ENCODE measurements at regions of chr3 and their contacts with region 1.

Region 1: DNA sequence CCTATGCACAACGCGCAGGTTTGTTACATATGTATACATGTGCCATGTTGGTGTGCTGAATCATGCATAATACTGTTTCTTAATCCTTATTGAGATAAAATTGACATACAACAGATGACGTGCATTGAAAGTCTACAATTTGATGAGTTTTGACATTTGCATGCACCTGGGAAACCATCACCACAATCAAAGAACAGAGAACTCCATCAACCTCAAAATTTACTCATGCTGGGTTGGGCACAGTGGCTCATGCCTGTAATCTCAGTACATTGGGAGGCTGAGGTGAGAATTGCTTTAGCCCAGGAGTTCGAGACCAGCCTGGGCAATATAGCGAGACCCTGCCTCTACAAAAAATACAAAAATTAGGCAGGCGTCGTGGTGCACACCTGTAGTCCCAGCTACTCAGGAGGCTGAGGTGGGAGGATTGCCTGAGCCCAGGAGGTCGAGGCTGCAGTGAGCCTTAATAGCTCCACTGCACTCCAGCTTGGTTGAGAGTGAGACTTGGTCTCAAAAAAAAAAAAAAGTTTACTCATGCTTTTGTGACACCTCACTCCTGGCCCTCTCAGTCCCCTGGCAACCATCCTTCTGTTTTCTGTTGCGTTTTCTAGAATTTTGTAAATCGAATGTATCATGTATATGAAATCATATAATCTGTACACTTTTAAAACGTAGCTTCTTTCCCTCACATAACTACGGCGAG is 56.6 kb downstream of the BHLHE40 start:
- DNase-seq: no peak
- H3K4me3 Mint-ChIP-seq: no peak overlapping the region
- H3K27ac Mint-ChIP-seq: peak overlapping the region; percentile 55
- H3K4me1 Mint-ChIP-seq: peaks cover 55% of the 10 kb centered on the region
- H3K27me3 Mint-ChIP-seq: no peaks in the 10 kb centered on the region

Region 2: GRCh38 chr3:4898454-4899313 is 137.2 kb before region 1 on chr3:
- intact Hi-C with region 1: no loop called
- DNase-seq: no peak
- H3K4me3 Mint-ChIP-seq: peak overlapping the region; percentile 15
- H3K27ac Mint-ChIP-seq: peak overlapping the region; percentile 90
- H3K4me1 Mint-ChIP-seq: peaks cover 76% of the 10 kb centered on the region
- H3K27me3 Mint-ChIP-seq: no peaks in the 10 kb centered on the region

Region 3: DNA sequence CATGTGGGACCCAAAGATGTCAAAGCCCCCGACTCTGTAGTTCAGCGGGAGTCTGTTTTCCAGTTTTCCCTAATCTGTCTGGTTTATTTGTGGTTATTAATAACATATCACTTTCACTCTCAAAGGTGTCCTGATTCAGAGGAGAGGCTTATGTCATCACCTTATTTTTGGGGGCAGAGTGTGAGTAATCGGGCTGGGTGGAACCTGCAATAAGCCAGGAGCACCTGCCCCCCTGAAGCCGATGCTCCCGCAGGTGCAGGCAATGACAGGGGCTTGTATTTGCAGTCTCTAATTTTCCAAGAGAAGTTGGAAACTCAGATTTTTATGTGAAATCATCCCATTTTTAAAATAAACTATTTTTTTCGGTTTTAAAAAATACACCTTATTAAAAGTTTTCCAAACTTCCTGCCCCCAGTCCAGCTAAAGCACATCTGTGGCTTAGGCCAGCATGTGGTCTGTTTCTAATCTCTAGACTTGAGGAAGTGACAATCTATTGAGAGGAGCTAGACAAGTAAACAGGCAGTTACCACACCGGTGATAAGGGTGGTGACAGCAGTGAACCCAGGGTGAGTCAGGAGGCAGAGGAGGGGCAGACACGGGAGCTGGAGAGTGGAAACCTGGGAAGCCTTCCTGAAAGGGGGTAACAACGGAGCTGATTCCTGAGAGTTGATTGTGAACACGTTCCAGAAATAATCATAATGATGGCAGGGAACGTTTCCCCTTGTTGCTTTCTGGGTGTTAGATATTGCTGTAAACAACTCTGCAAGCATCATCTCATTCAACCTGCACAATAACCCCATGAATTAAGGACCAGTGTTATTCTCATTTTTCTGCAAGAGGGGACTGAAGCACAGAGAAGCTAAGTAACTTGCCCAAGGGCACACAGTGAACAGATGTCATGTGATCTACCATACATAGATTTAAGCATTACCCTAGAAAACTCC is 19.4 kb before region 1 on chr3:
- intact Hi-C with region 1: no loop called
- DNase-seq: peak; percentile 47
- H3K4me3 Mint-ChIP-seq: peak overlapping the region; percentile 43
- H3K27ac Mint-ChIP-seq: peak overlapping the region; percentile 73
- H3K4me1 Mint-ChIP-seq: peaks cover 94% of the 10 kb centered on the region
- H3K27me3 Mint-ChIP-seq: peaks cover 1% of the 10 kb centered on the region

Region 4: DNA sequence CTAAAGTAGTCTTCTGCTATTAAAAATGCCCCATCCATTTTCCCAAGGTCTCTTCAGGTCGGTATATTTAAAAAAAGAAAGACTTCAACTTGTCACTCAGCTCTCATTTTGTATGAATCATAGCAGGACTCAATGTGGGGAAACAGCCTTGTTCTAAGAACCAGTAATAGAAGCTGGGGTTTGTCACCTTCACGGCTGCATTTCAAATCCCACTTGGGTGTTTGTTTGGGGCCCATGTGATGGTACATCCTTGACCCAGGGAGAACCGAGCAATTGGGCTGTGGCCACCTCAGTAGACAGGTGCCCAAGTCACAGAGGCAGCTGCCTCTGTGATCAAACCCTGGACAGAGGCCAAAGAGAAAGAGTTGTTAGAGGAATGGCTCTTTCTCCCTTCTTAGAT is 15.9 kb after region 1 on chr3:
- intact Hi-C with region 1: loop called (anchors 1 kb)
- DNase-seq: no peak
- H3K4me3 Mint-ChIP-seq: no peak overlapping the region
- H3K27ac Mint-ChIP-seq: peak overlapping the region; percentile 64
- H3K4me1 Mint-ChIP-seq: peaks cover 48% of the 10 kb centered on the region
- H3K27me3 Mint-ChIP-seq: no peaks in the 10 kb centered on the region